K562 (cell line): ENCODE measurements at regions of chr4 and their contacts with region 1.

Region 1: GRCh38 chr4:75908555-75908954 is 6.3 kb upstream of the PPEF2 start:
- DNase-seq: no peak
- ATAC-seq: no peak
- H3K4me3 ChIP-seq: no peak overlapping the region
- H3K27ac ChIP-seq: no peak overlapping the region
- H3K4me1 ChIP-seq: no peaks in the 10 kb centered on the region
- H3K27me3 ChIP-seq: peaks cover 0 to 7% of the 10 kb centered on the region in 2 experiments; a peak in 1 of 5 replicates
- CTCF ChIP-seq: no peak
- EP300 ChIP-seq: no peak
- POLR2A ChIP-seq: no peak
- RAD21 ChIP-seq: no peak

Region 2: DNA sequence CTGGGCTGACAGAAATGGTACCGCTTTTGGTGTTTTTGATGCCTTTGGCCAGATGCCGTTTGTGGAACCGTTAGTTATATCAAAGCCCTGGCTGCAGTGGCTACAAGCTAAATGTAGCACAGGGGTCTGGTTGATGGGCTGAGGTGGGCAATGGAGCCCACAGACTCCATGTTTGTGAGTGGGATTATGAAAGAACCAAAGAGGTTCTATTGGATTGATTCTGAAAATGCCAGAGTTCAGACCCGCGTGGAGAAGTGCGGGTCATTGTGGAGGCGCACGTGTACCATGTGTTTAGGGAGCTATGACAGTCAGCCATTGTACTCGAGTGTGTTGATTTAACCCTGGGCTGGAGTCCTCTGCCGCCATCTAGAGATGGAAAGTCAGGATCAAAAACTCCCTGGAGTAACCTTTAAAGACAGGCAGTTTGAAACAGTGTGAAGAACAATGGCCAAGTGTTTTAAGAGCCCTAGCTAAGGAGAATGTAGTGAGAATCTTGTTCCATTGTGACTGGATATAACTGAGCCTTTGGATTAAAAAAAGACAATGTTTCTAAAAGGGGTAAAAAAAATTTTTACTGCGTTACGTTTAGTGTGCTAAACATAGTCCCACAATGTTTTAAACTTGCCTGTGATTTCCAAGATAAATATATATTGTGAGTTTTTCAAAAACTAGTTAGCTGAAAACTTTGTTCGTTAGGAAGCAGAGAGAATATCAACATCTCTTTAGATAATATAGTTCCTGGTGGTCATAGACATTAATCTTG is 178.6 kb after region 1 on chr4:
- CTCF ChIA-PET with region 1: no interaction called
- POLR2A ChIA-PET with region 1: no interaction called
- in situ Hi-C with region 1: loop called (anchors 5 kb)
- intact Hi-C with region 1: no loop called
- DNase-seq: peak; percentile 55 to 84 (median 66)
- ATAC-seq: peak; percentile 92
- H3K4me3 ChIP-seq: no peak overlapping the region
- H3K27ac ChIP-seq: peak overlapping the region; percentile 41; the same call in 1 of the 3 replicates
- H3K4me1 ChIP-seq: peaks cover 0 to 15% of the 10 kb centered on the region in 2 experiments; a peak in 4 of 5 replicates
- H3K27me3 ChIP-seq: no peaks in the 10 kb centered on the region
- CTCF ChIP-seq: peak; percentile 79 to 88 (median 82)
- EP300 ChIP-seq: no peak
- POLR2A ChIP-seq: no peak
- RAD21 ChIP-seq: peak; percentile 76 to 82

Region 3: GRCh38 chr4:76257824-76258223 is 349.3 kb after region 1 on chr4:
- CTCF ChIA-PET with region 1: no interaction called
- POLR2A ChIA-PET with region 1: no interaction called
- in situ Hi-C with region 1: no loop called
- intact Hi-C with region 1: no loop called
- DNase-seq: no peak
- ATAC-seq: no peak
- H3K4me3 ChIP-seq: no peak overlapping the region
- H3K27ac ChIP-seq: no peak overlapping the region
- H3K4me1 ChIP-seq: peaks cover 0 to 18% of the 10 kb centered on the region in 2 experiments; a peak in 3 of 5 replicates
- H3K27me3 ChIP-seq: no peaks in the 10 kb centered on the region
- CTCF ChIP-seq: no peak
- EP300 ChIP-seq: no peak
- POLR2A ChIP-seq: no peak
- RAD21 ChIP-seq: no peak

Region 4: GRCh38 chr4:76377911-76378310 is 469.4 kb after region 1 on chr4:
- CTCF ChIA-PET with region 1: no interaction called
- POLR2A ChIA-PET with region 1: no interaction called
- in situ Hi-C with region 1: no loop called
- intact Hi-C with region 1: no loop called
- DNase-seq: peak; percentile 31 to 69 (median 49)
- ATAC-seq: peak; percentile 83
- H3K4me3 ChIP-seq: no peak overlapping the region
- H3K27ac ChIP-seq: no peak overlapping the region
- H3K4me1 ChIP-seq: peaks cover 0 to 7% of the 10 kb centered on the region in 2 experiments; a peak in 1 of 5 replicates
- H3K27me3 ChIP-seq: no peaks in the 10 kb centered on the region
- CTCF ChIP-seq: peak; percentile 75 to 79 (median 77)
- EP300 ChIP-seq: no peak
- POLR2A ChIP-seq: no peak
- RAD21 ChIP-seq: peak; percentile 54 to 83